WTC11 (cell line): ENCODE measurements at regions of chr19 and their contacts with region 1.

Region 1: DNA sequence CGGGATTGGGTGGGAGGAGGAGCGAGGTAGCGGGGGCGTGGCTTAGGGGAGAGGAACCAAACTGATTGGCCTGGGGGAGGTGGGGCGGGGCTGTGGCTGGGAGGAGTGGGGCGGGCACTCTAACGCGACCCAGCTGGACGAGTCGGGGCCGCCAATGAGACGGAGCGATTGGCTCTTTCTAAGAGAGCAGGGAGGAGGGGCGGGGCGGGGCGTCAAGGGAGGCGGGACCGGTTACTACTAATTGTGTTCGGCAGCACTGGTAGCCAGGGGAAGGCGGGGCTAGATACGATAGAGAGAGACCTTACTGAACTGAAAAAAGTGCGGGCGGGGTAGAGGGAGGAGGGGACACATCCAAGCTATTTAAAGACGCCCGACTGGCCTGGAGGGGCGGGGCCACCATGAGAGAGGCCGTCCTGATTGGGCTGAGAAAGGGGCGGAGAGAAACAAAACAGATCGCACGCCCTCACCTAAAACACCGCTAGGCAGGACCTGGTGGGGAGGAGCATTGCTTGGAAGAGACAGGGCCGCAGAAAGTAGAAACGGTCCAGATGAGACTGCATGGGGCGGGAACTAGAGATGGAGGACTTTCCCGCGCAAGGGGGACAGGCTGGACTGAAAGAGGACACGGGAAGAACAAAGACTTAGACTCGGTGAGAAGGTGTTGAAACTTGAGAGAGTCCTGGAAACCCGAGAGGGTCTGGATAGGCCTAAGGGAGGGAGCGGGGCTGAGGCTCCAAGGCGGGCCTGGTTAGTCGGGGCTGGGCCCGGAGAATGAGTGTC is at the start of gene KCNC3:
- DNase-seq: peak; percentile 100
- ATAC-seq: peak; percentile 62
- H3K4me3 Mint-ChIP-seq: peak within 1 kb of the TSS; percentile 85
- H3K27ac Mint-ChIP-seq: peak within 1 kb of the TSS; percentile 98
- H3K4me1 Mint-ChIP-seq: peaks cover 49% of the 10 kb centered on the region
- H3K27me3 Mint-ChIP-seq: peaks cover 38% of the 10 kb centered on the region
- CTCF ChIP-seq: no peak
- total RNA-seq, gene KCNC3: 8.5 to 10.1 TPM (median 10.0 TPM) in 3 replicates

Region 2: DNA sequence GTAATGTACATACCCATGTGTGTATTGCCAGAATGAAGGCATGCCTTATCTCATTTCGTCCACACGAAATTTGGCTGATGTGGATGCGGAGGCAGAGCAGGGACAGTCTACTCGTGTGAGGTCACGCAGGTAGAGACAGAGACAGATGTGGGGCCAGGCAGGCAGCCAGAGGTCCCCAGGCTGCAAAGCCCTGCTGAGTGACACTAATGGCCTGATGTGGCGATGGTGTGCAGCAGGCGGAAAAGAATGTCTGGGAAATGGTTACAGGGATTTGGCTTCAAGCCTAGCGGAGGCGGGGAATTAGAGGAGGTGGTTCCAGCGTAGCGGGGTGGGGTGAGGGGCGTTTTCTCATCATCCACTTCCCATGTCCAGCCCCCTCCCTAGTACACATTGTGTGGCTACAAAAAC is 162.0 kb before region 1 on chr19:
- CTCF ChIA-PET with region 1: interaction called, 10 read pairs
- POLR2A ChIA-PET with region 1: no interaction called
- DNase-seq: no peak
- ATAC-seq: no peak
- H3K4me3 Mint-ChIP-seq: no peak overlapping the region
- H3K27ac Mint-ChIP-seq: no peak overlapping the region
- H3K4me1 Mint-ChIP-seq: 0 out of 2 replicates have a peak, but pooled peaks cover 3% of the 10 kb centered on the region
- H3K27me3 Mint-ChIP-seq: peaks cover 19% of the 10 kb centered on the region
- CTCF ChIP-seq: no peak

Region 3: DNA sequence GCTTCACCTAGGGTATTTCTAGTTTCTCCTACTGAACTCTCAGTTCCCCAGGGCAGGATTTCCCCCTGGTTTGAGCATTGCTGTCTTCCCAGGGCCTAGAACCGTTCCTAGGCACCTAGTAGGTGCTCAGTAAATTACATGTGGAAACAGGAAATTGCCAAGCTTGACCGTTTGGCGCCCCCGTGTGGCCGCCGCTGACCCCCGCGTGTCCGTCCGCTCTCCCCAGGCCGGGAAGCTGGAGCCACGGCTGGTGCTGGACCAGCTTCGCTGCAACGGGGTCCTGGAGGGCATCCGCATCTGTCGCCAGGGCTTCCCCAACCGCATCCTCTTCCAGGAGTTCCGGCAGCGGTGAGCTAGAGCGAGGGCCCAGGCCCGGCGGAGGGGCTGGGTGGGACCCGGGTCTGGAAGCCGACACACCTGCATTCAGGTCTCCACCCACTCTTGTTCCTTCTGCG is 70.4 kb before region 1 on chr19:
- CTCF ChIA-PET with region 1: interaction called, 22 read pairs
- POLR2A ChIA-PET with region 1: no interaction called
- DNase-seq: peak; percentile 84
- ATAC-seq: peak; percentile 89
- H3K4me3 Mint-ChIP-seq: no peak overlapping the region
- H3K27ac Mint-ChIP-seq: no peak overlapping the region
- H3K4me1 Mint-ChIP-seq: no peaks in the 10 kb centered on the region
- H3K27me3 Mint-ChIP-seq: peaks cover 4% of the 10 kb centered on the region; the same call in 1 of the 2 replicates
- CTCF ChIP-seq: peak; percentile 89

Region 4: DNA sequence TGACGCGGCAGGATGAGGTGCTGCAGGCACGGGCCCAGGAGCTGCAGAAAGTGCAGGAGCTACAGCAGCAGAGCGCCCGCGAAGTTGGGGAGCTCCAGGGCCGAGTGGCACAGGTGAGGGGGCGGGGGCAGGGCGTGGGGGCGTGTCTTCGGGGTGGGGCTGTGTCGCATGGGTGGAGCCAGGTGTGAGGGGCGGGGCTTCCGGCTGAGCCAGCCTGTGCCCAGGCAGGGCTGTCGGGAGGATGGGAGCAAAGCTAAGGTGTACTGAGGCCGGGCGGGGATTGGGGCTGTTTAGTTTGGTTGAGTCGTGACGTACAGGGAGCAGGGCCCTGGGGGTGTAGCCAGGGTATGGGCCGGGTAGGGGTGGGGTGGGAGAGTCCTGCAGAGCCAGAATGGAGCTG is 62.4 kb before region 1 on chr19:
- CTCF ChIA-PET with region 1: interaction called, 26 read pairs
- POLR2A ChIA-PET with region 1: interaction called, 5 read pairs
- DNase-seq: peak; percentile 96
- ATAC-seq: peak; percentile 99
- H3K4me3 Mint-ChIP-seq: peak overlapping the region; percentile 32
- H3K27ac Mint-ChIP-seq: no peak overlapping the region
- H3K4me1 Mint-ChIP-seq: peaks cover 8% of the 10 kb centered on the region
- H3K27me3 Mint-ChIP-seq: no peaks in the 10 kb centered on the region
- CTCF ChIP-seq: no peak

Region 5: GRCh38 chr19:50315773-50316448 is 13.4 kb before region 1 on chr19:
- CTCF ChIA-PET with region 1: interaction called, 58 read pairs
- POLR2A ChIA-PET with region 1: interaction called, 21 read pairs
- DNase-seq: peak; percentile 75
- ATAC-seq: peak; percentile 24
- H3K4me3 Mint-ChIP-seq: peak overlapping the region; percentile 82
- H3K27ac Mint-ChIP-seq: peak overlapping the region; percentile 98
- H3K4me1 Mint-ChIP-seq: peaks cover 30% of the 10 kb centered on the region
- H3K27me3 Mint-ChIP-seq: peaks cover 6% of the 10 kb centered on the region
- CTCF ChIP-seq: no peak

Region 6: GRCh38 chr19:50357178-50358100 is 28.1 kb after region 1 on chr19:
- CTCF ChIA-PET with region 1: interaction called, 12 read pairs
- POLR2A ChIA-PET with region 1: interaction called, 7 read pairs
- DNase-seq: peak; percentile 86
- ATAC-seq: peak; percentile 86
- H3K4me3 Mint-ChIP-seq: no peak overlapping the region; the same call in 1 of the 2 replicates
- H3K27ac Mint-ChIP-seq: no peak overlapping the region
- H3K4me1 Mint-ChIP-seq: peaks cover 2% of the 10 kb centered on the region; the same call in 1 of the 2 replicates
- H3K27me3 Mint-ChIP-seq: peaks cover 21% of the 10 kb centered on the region
- CTCF ChIP-seq: peak; percentile 78